PC-9 (cell line): ENCODE measurements at regions of chr6 and their contacts with region 1.

Region 1: GRCh38 chr6:37113976-37114375 is 56.0 kb upstream of the PIM1 start:
- DNase-seq: no peak
- H3K4me3 ChIP-seq: no peak overlapping the region
- H3K27ac ChIP-seq: no peak overlapping the region
- H3K4me1 ChIP-seq: peaks cover 26% of the 10 kb centered on the region
- H3K27me3 ChIP-seq: no peaks in the 10 kb centered on the region
- CTCF ChIP-seq: no peak

Region 2: GRCh38 chr6:37051138-37052026 is 62.6 kb before region 1 on chr6:
- CTCF ChIA-PET with region 1: interaction called, 14 read pairs
- POLR2A ChIA-PET with region 1: no interaction called
- intact Hi-C with region 1: no loop called
- DNase-seq: peak; percentile 52 to 82
- H3K4me3 ChIP-seq: no peak overlapping the region
- H3K27ac ChIP-seq: no peak overlapping the region
- H3K4me1 ChIP-seq: peaks cover 48% of the 10 kb centered on the region
- H3K27me3 ChIP-seq: no peaks in the 10 kb centered on the region
- CTCF ChIP-seq: peak; percentile 89

Region 3: DNA sequence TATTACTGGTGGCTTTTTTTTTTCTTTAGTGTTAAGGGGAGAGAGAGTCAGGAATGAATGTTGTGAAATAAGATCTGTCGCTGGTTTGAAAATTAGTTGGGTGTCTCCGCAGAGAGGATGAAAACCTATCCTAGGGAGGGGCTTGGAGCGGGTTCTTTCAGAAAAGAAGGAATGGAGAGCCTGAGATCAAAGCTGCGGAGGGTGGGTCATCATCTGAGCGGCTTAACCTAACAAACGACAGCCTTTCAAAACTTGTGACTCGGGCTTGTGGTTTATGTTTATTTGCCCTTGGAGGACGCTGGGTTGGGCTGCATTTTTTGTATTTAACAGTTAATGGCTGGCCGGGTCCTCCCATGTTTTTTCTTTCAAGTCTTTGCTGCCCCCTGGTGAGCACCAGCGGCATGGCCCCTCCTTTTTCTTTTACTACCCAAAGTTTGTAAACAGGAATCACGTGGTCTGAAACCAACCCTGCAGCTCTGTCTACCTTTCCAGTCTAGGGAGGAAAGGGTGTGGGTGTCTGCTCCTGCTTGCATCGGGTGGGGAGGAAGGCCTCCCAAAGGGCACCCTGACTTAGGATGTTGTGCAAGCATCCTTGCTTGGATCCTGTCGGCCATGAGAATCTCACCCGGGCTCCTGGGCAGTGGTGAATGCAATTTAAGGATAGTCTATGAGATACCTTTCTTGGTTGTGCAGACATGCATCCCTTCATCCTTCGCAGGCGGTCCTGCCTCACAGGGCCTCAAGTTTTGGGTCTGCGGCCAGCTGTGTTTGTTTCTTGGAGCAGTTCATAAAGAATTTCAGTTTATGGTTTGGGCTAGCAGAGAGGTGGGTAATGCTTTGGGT is 58.2 kb after region 1 on chr6:
- CTCF ChIA-PET with region 1: no interaction called
- POLR2A ChIA-PET with region 1: no interaction called
- intact Hi-C with region 1: no loop called
- DNase-seq: peak; percentile 92 to 97
- H3K4me3 ChIP-seq: peak overlapping the region; percentile 64
- H3K27ac ChIP-seq: peak overlapping the region; percentile 89
- H3K4me1 ChIP-seq: peaks cover 33% of the 10 kb centered on the region
- H3K27me3 ChIP-seq: no peaks in the 10 kb centered on the region
- CTCF ChIP-seq: peak; percentile 94